Aorta (tissue), 5 donors: ENCODE measurements at regions of chr7 and their contacts with region 1.

Region 1: GRCh38 chr7:135672560-135673359 is 10.4 kb downstream of the STMP1 start:
- DNase-seq: no peak
- ATAC-seq: peak; percentile 88
- H3K4me3 ChIP-seq: no peak overlapping the region
- H3K27ac ChIP-seq: peak overlapping the region in 1 of 2 donors; percentile 12
- H3K4me1 ChIP-seq: peaks cover 1 to 9% of the 10 kb centered on the region in 2 donors
- H3K27me3 ChIP-seq: no peaks in the 10 kb centered on the region

Region 2: DNA sequence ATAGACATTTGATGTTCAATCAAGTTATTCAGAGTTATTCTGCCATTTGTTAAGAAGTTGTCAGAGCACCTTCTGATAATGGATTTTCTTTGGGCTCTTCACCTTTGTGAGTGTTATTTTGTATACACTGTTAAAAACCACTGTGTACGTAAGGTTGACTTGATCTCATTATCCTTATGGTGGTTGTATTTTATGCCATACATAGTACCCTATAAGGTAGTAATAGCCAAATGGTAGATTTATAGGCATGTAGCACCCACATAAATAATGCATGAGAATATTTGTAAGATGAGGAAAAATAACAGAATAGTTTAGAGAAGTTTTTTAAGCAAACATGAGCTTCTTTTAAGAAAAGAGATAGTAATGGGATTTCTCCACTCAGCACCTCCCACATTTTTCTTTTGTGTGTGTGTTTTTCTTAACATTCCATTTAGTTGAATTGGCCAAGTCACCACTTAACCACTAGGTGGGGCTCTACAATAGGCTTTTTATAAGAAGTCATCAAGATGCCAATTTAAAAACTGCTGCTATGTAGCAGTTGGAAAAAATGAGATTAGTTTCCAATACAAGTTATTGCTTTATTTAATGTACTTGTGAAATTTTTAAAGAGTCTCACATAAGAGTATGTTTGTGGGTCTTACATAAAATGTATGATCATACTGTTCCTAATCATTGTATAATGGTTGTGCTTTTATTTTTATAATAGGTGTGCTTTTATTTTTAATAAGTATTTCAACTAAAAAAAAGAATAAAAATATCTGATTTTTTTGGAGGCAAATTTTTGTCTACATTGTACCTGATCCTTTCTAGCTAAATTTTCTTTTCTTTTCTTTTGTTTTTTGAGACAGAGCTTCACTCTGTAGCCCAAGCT is 51.5 kb before region 1 on chr7:
- intact Hi-C with region 1: no loop called
- DNase-seq: no peak
- ATAC-seq: peak; percentile 85
- H3K4me3 ChIP-seq: no peak overlapping the region
- H3K27ac ChIP-seq: no peak overlapping the region
- H3K4me1 ChIP-seq: no peaks in the 10 kb centered on the region
- H3K27me3 ChIP-seq: no peaks in the 10 kb centered on the region

Region 3: DNA sequence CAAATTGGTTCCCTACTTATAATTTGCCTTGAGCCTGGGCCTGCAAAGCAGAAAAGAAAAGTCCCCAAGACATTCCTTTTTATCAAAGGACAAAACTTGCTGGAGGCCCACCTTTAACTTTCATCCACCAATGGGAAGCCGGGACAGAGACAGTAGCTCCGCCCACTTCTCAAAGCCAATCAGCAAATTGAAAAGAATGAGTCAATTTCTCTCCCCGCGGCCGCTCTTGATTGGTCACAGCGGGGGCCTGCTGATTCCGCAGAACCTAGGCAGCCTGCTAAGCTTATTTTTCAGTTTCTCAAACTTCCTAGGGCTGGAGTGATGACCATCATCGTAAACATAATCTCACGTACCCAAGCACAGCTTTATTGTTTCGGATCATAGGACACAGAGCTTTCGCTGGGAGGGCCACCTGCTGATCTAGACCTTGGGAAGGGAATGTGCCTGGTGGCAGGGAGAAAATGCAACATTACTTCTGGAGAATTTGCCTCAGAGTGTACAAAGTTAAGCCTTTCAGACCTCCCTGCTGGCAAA is 55.4 kb after region 1 on chr7 and contains the start of gene SLC13A4:
- intact Hi-C with region 1: no loop called
- DNase-seq: no peak
- ATAC-seq: no peak
- H3K4me3 ChIP-seq: no peak within 1 kb of the TSS
- H3K27ac ChIP-seq: no peak within 1 kb of the TSS
- H3K4me1 ChIP-seq: no peaks in the 10 kb centered on the region
- H3K27me3 ChIP-seq: no peaks in the 10 kb centered on the region
- total RNA-seq, gene SLC13A4: 1.7 to 2.2 TPM

Region 4: DNA sequence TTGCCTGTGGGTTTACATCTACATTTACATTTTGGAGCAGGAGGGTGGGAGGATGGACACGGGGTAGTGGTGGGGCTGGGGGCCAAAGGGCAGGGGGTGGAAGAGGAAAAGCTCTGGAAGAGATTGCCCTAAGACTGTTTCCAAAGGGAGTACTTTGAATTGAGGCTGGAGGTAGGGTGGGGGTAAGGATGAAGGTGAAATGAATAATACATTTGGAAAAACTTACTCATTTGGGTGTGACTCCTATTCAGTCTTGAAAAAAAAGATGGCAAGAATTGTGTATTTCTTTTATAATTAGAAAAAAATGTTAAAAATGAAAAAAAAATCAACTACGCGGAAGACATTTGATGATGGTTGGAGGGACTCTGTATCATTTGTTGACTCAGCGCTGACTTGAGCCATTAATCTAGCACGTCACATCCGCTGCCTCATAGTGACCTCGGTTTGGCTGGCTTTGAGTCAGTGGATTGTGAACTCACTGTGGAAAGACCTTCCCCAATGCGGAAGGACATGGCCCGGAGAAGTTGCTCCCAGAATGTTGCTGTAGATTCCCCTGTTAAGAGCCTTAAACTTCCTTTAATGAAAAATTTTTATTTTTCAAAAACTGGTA is 73.0 kb after region 1 on chr7:
- intact Hi-C with region 1: loop called in 1 of 2 experiments (anchors 5 kb)
- DNase-seq: peak; percentile 86 to 89
- ATAC-seq: peak; percentile 89
- H3K4me3 ChIP-seq: no peak overlapping the region
- H3K27ac ChIP-seq: peak overlapping the region; percentile 73 to 92
- H3K4me1 ChIP-seq: no peaks in the 10 kb centered on the region
- H3K27me3 ChIP-seq: no peaks in the 10 kb centered on the region

Region 5: GRCh38 chr7:136086712-136087111 is 414.0 kb after region 1 on chr7:
- intact Hi-C with region 1: loop called in 1 of 2 experiments (anchors 10 kb)
- DNase-seq: peak in 1 of 2 donors; percentile 52
- ATAC-seq: peak; percentile 91
- H3K4me3 ChIP-seq: peak overlapping the region; percentile 34 to 69
- H3K27ac ChIP-seq: no peak overlapping the region
- H3K4me1 ChIP-seq: no peaks in the 10 kb centered on the region
- H3K27me3 ChIP-seq: peaks cover 0 to 1% of the 10 kb centered on the region in 2 donors